Dorsolateral prefrontal cortex (tissue), 120 donors: ENCODE measurements at regions of chr15 and their contacts with region 1.

Region 1: DNA sequence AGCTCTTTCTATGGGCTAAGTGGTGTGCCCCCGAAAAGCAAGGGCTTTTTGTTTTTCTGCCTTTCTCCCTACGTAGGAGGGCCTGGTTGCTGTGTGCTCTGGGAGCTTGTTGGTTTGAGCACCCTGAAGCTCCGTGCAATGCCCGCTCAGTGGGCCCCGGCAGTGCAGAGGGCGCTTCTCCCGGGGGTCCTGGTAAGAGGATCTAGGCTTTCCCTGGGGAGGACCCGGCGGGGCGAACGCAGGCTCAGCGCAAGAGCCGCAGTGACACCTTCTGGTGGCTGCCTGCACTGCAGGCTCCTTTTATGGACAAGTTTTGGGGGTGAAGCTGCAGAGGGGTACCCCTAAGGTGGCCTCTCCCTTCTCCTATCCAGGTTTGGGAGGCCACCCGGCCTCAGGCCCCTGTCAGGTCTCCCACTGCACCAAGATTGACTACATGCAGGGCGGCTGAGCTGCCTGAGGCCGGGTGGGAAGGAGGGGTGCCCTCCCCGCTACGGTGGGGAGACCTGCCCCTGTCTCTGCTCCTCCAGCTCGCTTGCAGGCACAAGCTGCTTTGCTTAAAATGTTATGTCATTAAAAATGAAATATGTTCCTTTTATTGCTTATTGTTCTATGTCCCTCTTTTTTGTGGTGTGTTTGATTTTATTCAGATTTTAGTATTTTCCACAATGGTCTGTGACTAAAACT is 387.9 kb downstream of the GABRG3 start:
- DNase-seq: peak in 8 of 10 donors; percentile 34 to 75 (median 64)
- H3K4me3 ChIP-seq: peak overlapping the region in 45 of 59 donors; percentile 8 to 58 (median 37)
- H3K27ac ChIP-seq: peak overlapping the region in 43 of 59 donors; percentile 12 to 78 (median 56)
- H3K27me3 ChIP-seq: no peaks in the 10 kb centered on the region
- CTCF ChIP-seq: peak; percentile 63 to 94 (median 87)

Region 2: DNA sequence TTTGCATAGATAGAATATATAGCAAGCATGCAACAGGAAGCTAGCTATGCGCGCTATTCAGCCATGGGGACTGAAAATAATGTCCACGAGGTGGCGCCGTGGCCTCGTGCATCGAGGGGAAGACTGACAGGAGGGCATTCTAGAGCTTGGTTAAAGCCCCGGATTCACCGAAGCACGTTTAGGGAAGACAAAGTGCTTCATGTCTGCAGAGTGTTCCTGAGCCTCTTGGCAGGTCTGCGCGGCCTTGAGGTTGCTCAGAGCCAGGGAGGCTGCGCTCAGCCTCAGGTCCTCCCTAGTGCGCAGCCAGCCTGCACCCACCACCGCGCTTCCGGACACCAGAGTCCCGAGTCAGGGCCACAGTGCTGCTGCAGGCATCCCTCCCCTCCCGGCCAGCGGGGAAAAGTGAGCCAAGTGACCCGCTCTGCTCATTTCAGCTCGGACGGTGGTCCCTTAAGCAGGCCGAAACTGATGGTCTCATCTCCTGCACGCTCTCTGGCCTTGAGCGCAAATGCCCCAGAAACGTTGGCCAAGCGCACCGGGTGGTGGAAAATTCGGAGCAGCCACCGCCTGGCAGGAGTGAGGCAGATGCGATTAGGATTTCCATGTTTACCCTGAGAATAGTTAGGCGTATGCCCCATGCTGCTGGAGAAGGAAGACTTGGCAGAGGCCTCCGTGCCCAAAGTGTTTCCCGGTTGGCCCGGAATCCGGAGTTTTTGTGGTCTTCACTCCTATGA is 467.3 kb before region 1 on chr15:
- intact Hi-C with region 1: loop called (anchors 2 kb)
- DNase-seq: peak in 9 of 10 donors; percentile 67 to 89 (median 82)
- H3K4me3 ChIP-seq: peak overlapping the region; percentile 16 to 71 (median 50)
- H3K27ac ChIP-seq: peak overlapping the region in 6 of 59 donors; percentile 21 to 64 (median 45)
- H3K27me3 ChIP-seq: peaks cover 0 to 7% (median 0%) of the 10 kb centered on the region in 45 donors
- CTCF ChIP-seq: peak; percentile 68 to 95 (median 86)

Region 3: GRCh38 chr15:27059610-27060202 is 299.2 kb before region 1 on chr15:
- intact Hi-C with region 1: loop called in 1 of 2 experiments (anchors 2 kb)
- DNase-seq: peak in 1 of 10 donors; percentile 48
- H3K4me3 ChIP-seq: no peak overlapping the region
- H3K27ac ChIP-seq: no peak overlapping the region
- H3K27me3 ChIP-seq: peaks cover 0 to 3% (median 0%) of the 10 kb centered on the region in 45 donors
- CTCF ChIP-seq: peak; percentile 42 to 80 (median 71)

Region 4: GRCh38 chr15:27491666-27492621 is 133.1 kb after region 1 on chr15:
- intact Hi-C with region 1: loop called in 1 of 2 experiments (anchors 10 kb)
- DNase-seq: peak in 7 of 10 donors; percentile 12 to 74 (median 55)
- H3K4me3 ChIP-seq: peak overlapping the region in 17 of 59 donors; percentile 8 to 44 (median 17)
- H3K27ac ChIP-seq: peak overlapping the region in 54 of 59 donors; percentile 2 to 85 (median 64)
- H3K27me3 ChIP-seq: no peaks in the 10 kb centered on the region
- CTCF ChIP-seq: peak in 2 of 56 donors; percentile 6 to 21